Dendritic cell treated with granulocyte-macrophage colony-stimulating factor and Interleukin-4, amounts not matched to agents 40 ng/mL and 50 ng/mL, for 4 days (primary cell): ENCODE measurements at regions of chrX and their contacts with region 1.

Region 1: DNA sequence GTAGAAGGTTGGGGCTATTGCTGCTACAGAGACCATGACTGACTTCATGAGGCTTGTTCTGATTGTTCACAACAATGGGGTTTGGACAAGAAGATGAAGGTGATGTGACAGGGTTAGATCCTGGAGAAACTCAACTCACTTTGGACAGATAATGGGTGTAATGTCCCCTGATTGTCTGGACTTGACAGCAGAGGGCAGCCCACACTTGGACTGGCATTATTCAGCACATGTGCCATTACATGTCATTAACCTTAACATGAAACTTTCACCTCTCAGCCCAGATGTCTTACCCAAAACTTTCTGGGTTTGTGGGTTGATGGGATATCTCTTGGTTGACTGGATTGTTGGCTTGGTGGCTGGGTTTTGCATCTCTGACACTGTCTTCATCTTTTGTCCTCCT is 101.5 kb downstream of the MXRA5 start:
- H3K4me3 Mint-ChIP-seq: no peak overlapping the region
- H3K27ac Mint-ChIP-seq: no peak overlapping the region
- H3K4me1 Mint-ChIP-seq: peaks cover 12% of the 10 kb centered on the region
- H3K27me3 Mint-ChIP-seq: peaks cover 10% of the 10 kb centered on the region

Region 2: DNA sequence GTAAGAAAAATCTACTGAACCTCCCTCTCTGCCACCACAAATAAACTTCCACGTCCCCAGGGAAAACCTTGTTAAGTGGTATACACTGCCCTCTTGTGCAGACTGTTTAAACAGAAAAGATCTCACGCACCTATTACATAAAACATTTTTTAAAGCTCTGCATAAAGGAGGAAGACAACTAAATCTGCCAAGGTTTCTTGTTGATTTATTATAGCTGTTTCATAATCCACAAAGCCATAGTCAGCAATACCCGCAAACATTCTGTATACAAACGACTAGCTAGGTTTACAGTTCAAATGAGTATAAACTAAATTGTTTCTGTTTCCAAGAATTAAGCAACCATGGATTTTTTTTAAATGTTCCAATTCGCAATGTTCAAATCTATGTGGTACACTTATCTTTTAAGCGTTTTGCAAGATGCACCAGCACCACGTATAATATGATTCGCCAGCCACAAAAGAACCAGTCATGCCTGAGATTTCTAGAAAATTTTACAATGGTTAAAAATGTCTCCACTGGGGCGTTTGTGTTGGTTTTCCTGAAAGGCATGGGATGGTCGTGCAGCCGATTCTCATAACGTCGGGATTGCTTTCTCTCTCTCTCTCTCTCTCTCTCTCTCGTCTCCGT is 303.9 kb after region 1 on chrX:
- intact Hi-C with region 1: loop called (anchors 5 kb)
- H3K4me3 Mint-ChIP-seq: no peak overlapping the region
- H3K27ac Mint-ChIP-seq: no peak overlapping the region
- H3K4me1 Mint-ChIP-seq: peaks cover 5% of the 10 kb centered on the region
- H3K27me3 Mint-ChIP-seq: peaks cover 5% of the 10 kb centered on the region

Region 3: DNA sequence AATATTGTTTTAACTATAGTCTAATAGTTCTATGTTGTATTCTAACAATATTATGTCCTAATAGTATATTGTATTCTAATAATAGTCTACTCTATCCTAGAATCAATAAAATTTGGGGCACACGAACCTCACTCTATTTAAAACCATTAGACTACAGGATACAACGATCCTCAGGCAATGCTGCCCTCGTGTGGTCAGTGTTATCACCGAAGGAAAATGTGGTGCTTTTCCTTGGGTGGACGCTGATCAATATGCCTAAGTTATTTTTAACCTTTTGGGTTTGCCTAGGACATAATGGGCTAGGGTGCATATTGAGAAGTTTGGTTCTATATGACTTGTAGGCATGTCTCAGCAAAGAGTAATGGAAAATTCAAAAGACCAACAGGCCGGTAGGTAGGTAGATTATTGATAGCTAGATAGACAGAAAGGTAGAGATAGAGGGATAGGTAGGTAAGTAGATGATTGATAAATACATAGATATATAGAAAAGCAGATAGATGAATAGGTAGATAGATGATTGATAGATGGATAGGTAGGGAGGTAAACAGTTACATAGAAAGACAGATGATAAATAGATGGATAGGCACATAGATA is 393.4 kb after region 1 on chrX:
- intact Hi-C with region 1: loop called (anchors 5 kb)
- H3K4me3 Mint-ChIP-seq: no peak overlapping the region
- H3K27ac Mint-ChIP-seq: no peak overlapping the region
- H3K4me1 Mint-ChIP-seq: peaks cover 6% of the 10 kb centered on the region
- H3K27me3 Mint-ChIP-seq: no peaks in the 10 kb centered on the region